Heart right ventricle (tissue), 16 donors: ENCODE measurements at regions of chr2 and their contacts with region 1.

Region 1: GRCh38 chr2:33267756-33268155 is 208.7 kb upstream of the RASGRP3 start:
- DNase-seq: no peak
- ATAC-seq: no peak
- H3K4me3 ChIP-seq: no peak overlapping the region
- H3K27ac ChIP-seq: peak overlapping the region in 1 of 10 donors; percentile 4
- H3K4me1 ChIP-seq: peaks cover 0 to 19% (median 11%) of the 10 kb centered on the region in 9 donors
- H3K27me3 ChIP-seq: no peaks in the 10 kb centered on the region
- CTCF ChIP-seq: no peak

Region 2: DNA sequence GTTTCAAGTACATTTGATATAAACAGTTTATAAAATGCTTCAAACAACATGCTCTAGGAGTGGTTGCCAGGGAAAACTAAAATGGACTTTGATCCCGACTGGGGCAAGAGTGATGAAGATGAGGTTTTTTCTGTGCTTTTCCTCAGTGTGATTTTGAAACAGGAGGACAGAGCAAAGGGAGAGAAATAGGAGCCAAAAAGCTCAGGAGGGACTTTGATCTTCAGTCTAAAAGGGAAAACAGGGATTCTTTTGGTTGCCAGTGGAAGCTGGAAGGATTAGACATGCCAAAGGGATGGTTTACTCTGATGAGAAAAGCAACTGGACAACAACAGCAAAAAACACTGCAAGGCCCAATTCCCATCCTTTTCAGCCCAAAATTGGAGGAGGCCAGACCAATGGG is 225.5 kb before region 1 on chr2:
- intact Hi-C with region 1: loop called in 9 of 10 experiments (anchors 5 to 10 kb)
- DNase-seq: no peak
- ATAC-seq: no peak
- H3K4me3 ChIP-seq: no peak overlapping the region
- H3K27ac ChIP-seq: no peak overlapping the region
- H3K4me1 ChIP-seq: peaks cover 0 to 11% (median 0%) of the 10 kb centered on the region in 9 donors
- H3K27me3 ChIP-seq: no peaks in the 10 kb centered on the region
- CTCF ChIP-seq: no peak

Region 3: DNA sequence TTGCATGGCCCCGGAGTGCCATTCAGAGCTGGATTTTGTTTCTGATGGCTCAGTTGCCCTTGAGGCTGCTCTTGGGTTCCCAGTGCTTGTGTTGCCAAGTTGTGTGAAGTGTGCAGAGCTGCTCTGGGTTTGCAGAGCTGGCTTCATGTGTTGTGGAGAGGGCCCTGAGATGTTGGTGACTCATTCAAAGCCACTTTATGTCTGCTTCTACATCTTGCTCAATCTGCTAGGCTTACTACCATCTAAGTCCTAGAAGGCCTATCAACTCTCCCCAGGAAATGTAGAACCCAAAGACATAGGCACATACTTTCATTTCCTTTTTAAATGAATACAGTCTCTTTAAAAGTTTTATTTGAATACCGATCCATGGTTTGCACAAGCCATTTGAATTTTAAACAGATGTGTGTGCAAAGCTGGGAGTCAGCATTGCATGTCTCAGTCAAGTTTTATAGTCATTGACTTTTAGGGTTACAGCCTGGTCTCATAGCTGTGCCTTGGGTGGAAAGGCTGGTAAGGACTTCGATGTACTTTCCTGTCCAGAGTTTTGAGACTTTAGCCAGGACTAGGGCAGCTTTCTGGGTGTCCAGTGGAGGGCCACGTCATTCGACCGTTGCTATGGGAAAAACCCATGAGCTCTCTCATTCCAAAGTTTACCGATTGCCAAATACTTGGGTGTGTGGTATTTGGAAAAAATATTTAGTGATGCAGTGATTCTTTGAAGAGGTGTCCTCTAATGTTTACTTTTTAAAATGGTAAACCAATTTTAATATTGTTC is 216.0 kb before region 1 on chr2:
- intact Hi-C with region 1: loop called in 1 of 10 experiments (anchors 10 kb)
- DNase-seq: no peak
- ATAC-seq: peak in 4 of 8 donors; percentile 34 to 93 (median 55)
- H3K4me3 ChIP-seq: no peak overlapping the region
- H3K27ac ChIP-seq: peak overlapping the region in 1 of 10 donors; percentile 38
- H3K4me1 ChIP-seq: peaks cover 0 to 17% (median 3%) of the 10 kb centered on the region in 9 donors
- H3K27me3 ChIP-seq: no peaks in the 10 kb centered on the region
- CTCF ChIP-seq: no peak

Region 4: DNA sequence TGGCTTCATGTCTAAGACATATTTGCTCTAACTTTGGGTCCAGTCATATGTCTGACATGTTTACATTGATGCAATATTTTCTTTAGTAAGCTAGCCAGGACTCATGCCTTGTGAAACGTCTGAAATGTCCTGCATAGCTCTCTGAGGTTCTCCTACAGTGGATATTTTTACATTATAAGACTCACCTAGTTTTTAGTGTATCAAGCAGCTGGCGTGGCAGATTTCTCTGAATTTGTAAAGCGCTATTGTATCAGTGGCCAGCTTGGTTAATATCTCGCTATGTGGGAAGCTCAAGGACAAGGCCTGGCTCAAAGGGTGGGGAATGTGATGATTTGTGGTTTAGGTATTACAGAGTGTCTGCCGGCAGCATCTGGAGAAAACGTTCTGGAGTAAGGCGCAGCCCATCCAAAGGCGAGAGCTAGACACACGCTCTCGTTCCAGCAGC is 156.7 kb before region 1 on chr2:
- intact Hi-C with region 1: loop called in 1 of 10 experiments (anchors 10 kb)
- DNase-seq: no peak
- ATAC-seq: peak in 5 of 8 donors; percentile 15 to 58 (median 54)
- H3K4me3 ChIP-seq: no peak overlapping the region
- H3K27ac ChIP-seq: peak overlapping the region in 1 of 10 donors; percentile 3
- H3K4me1 ChIP-seq: peaks cover 0 to 54% (median 23%) of the 10 kb centered on the region in 9 donors
- H3K27me3 ChIP-seq: no peaks in the 10 kb centered on the region
- CTCF ChIP-seq: no peak

Region 5: DNA sequence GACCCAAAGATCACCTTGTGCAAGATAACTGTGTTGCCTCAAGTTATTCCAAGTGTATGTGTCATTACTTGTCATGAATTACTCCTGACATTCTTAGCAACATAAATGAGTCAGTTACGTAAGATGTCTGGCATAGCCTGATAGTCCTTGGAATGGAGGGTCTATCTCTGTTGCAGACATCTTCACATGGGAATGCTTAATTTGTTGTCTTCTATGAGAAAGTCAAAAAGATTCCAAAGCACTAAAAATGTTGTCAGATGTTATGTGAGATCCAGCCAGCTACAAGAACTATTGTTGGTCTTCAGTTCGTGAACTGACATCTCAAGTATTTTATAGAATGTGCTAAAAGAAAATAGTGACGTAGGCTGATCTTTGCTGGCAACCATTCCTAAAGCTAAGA is 30.5 kb after region 1 on chr2:
- intact Hi-C with region 1: no loop called
- DNase-seq: no peak
- ATAC-seq: peak in 3 of 8 donors; percentile 31 to 50 (median 36)
- H3K4me3 ChIP-seq: no peak overlapping the region
- H3K27ac ChIP-seq: peak overlapping the region in 6 of 10 donors; percentile 36 to 54 (median 41)
- H3K4me1 ChIP-seq: peaks cover 0 to 31% (median 26%) of the 10 kb centered on the region in 9 donors
- H3K27me3 ChIP-seq: no peaks in the 10 kb centered on the region
- CTCF ChIP-seq: no peak